H1 (cell line): ENCODE measurements at regions of chr12 and their contacts with region 1.

Region 1: DNA sequence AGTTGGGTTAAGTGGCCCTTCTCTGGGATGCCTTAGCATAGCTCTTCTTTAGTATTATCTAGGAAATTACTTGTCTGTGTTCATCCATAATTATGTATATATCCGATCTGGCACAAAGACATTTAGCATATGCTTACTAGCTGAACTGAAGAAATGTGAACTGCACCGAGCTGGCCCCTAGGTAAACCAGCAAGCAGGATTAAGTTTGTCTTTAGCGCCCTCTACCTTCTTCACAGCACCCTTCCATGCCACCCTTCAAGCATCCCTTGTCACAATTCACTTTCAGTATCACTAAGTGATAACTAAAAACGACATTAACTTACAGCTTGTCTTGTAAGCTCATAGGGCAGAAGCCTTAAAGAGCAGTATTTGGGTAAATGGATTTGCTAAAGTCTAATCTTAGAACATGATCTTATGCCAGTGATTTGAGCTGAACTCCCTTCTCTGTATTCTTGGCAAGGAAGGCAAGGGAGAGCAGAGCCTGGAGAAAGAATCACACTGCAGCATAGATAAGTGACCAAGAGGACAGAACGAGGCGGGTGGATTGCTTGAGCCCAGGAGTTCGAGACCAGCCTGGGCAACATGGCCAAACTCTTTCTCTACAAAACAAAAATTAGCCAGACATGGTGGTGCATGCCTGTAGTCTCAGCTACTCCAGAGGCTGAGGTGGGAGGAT is 2.6 kb upstream of the HAL start:
- DNase-seq: peak in 1 of 2 experiments; percentile 29
- H3K4me3 ChIP-seq: no peak overlapping the region
- H3K27ac ChIP-seq: no peak overlapping the region
- H3K4me1 ChIP-seq: peaks cover 0 to 3% (median 0%) of the 10 kb centered on the region in 4 experiments; a peak in 1 of 7 replicates
- H3K27me3 ChIP-seq: no peaks in the 10 kb centered on the region
- CTCF ChIP-seq: peak; percentile 37 to 87 (median 84)
- EP300 ChIP-seq: no peak
- POLR2A ChIP-seq: no peak
- RAD21 ChIP-seq: peak; percentile 81 to 89

Region 2: DNA sequence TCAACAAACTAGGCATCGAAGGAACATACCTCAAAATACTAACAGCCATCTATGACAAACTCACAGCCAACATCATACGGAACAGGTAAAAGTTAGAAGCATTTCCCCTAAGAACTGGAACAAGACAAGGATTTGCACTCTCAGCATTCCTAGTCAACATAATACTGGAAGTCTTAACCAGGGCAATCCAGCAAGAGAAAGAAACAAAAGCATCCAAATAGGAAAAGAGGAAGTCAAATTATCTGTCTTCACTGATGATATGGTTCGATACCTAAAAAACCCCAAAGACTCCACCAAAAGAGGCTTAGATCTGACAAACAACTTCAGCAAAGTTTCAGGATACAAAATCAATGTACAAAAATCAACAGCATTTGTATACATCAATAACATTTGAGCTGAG is 88.9 kb before region 1 on chr12:
- CTCF ChIA-PET with region 1: interaction called, 145 read pairs
- POLR2A ChIA-PET with region 1: interaction called, 3 read pairs
- DNase-seq: no peak
- H3K4me3 ChIP-seq: no peak overlapping the region
- H3K27ac ChIP-seq: no peak overlapping the region
- H3K4me1 ChIP-seq: no peaks in the 10 kb centered on the region
- H3K27me3 ChIP-seq: no peaks in the 10 kb centered on the region
- CTCF ChIP-seq: no peak
- EP300 ChIP-seq: no peak
- POLR2A ChIP-seq: no peak
- RAD21 ChIP-seq: no peak

Region 3: DNA sequence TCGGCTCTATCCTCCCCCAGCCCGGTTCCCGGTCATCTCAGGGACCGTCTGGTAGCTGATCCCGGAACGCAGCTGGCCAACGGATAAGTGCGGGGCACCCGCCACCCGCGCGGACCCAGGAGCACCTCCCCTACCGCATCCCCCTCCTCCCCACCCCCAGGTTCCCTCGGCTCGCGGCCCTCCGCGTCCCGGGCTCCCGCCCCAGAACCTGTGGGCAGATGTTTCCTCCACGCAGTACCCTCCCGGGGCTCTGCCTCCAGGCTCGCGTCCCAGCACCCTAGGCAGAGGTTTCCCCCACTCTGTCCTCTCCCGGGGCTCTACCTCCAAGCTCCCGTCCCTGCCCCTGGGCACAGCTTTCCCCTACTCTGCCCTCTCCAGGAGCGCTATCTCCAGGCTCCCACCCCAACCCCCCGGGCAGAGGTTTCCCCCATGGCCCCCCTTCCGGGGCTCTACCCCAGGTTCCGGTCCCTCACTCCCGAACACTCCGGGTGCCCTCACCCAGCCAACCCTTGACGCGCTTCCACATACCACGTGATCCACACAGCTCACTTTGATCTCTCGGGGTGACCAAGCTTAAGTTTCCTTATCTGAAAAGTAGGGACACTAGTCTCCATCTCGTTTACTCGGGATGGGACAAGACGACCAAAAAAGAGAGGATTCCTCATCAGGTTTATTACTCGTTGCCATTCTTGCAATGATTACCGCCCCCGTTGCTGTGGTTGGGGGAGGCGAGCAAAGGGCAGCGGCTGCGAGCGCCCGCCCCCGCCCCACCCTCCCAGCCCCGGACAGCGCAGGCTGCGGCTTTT is 56.0 kb before region 1 on chr12 and contains the start of gene CCDC38:
- CTCF ChIA-PET with region 1: interaction called, 13 read pairs
- POLR2A ChIA-PET with region 1: no interaction called
- DNase-seq: peak in 1 of 2 experiments; percentile 84
- H3K4me3 ChIP-seq: peak within 1 kb of the TSS; percentile 59 to 95 (median 74)
- H3K27ac ChIP-seq: no peak within 1 kb of the TSS
- H3K4me1 ChIP-seq: peaks cover 0 to 4% (median under 1%) of the 10 kb centered on the region in 4 experiments; a peak in 3 of 7 replicates
- H3K27me3 ChIP-seq: peaks cover 0 to 11% (median 10%) of the 10 kb centered on the region in 4 experiments; a peak in 5 of 7 replicates
- CTCF ChIP-seq: no peak
- EP300 ChIP-seq: no peak
- POLR2A ChIP-seq: peak in 1 of 2 experiments; percentile 28; a peak in 1 of 3 replicates
- RAD21 ChIP-seq: no peak
- total RNA-seq, gene CCDC38: not detected in 2 replicates

Region 4: DNA sequence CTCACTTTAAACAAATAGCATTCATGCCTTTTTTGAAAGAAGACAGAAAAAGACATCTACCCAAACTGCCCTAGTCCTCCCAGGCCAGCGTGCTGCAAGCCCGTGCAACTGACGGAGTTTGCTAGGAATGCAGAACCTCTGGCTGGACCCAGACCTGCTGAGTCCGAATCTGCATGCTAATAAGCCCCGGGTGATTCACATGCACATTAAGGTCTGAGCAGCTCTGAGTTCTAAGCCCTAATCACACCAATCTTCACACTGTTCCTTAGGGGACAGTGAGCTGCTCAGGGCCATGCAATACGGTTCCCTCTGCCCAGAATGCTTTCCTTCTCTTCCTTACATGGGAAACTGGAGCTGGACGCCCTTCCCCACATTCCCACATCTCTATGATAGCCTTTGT is 27.8 kb before region 1 on chr12:
- CTCF ChIA-PET with region 1: interaction called, 149 read pairs
- POLR2A ChIA-PET with region 1: no interaction called
- DNase-seq: peak in 1 of 2 experiments; percentile 72
- H3K4me3 ChIP-seq: peak overlapping the region in 1 of 4 experiments; percentile 4; a peak in 1 of 8 replicates
- H3K27ac ChIP-seq: no peak overlapping the region
- H3K4me1 ChIP-seq: peaks cover 0 to 10% (median 5%) of the 10 kb centered on the region in 4 experiments; a peak in 6 of 7 replicates
- H3K27me3 ChIP-seq: no peaks in the 10 kb centered on the region
- CTCF ChIP-seq: no peak
- EP300 ChIP-seq: no peak
- POLR2A ChIP-seq: no peak
- RAD21 ChIP-seq: no peak

Region 5: GRCh38 chr12:95986635-95987570 is 11.8 kb before region 1 on chr12:
- CTCF ChIA-PET with region 1: interaction called, 53 read pairs
- POLR2A ChIA-PET with region 1: interaction called, 4 read pairs
- DNase-seq: no peak
- H3K4me3 ChIP-seq: no peak overlapping the region
- H3K27ac ChIP-seq: no peak overlapping the region
- H3K4me1 ChIP-seq: peaks cover 0 to 8% (median 4%) of the 10 kb centered on the region in 4 experiments; a peak in 5 of 7 replicates
- H3K27me3 ChIP-seq: no peaks in the 10 kb centered on the region
- CTCF ChIP-seq: no peak
- EP300 ChIP-seq: no peak
- POLR2A ChIP-seq: no peak
- RAD21 ChIP-seq: no peak